Endothelial cell of umbilical vein (primary cell): ENCODE measurements at regions of chr4 and their contacts with region 1.

Region 1: GRCh38 chr4:42480717-42481116 is 83.4 kb downstream of the SHISA3 start:
- DNase-seq: no peak
- H3K4me3 ChIP-seq: no peak overlapping the region
- H3K27ac ChIP-seq: no peak overlapping the region
- H3K4me1 ChIP-seq: no peaks in the 10 kb centered on the region
- H3K27me3 ChIP-seq: no peaks in the 10 kb centered on the region
- CTCF ChIP-seq: no peak
- POLR2A ChIP-seq: no peak

Region 2: GRCh38 chr4:41232406-41232805 is 1248.3 kb before region 1 on chr4:
- CTCF ChIA-PET with region 1: no interaction called
- POLR2A ChIA-PET with region 1: no interaction called
- dilution Hi-C with region 1: no loop called
- intact Hi-C with region 1: no loop called
- DNase-seq: peak; percentile 38
- H3K4me3 ChIP-seq: no peak overlapping the region
- H3K27ac ChIP-seq: no peak overlapping the region
- H3K4me1 ChIP-seq: no peaks in the 10 kb centered on the region
- H3K27me3 ChIP-seq: peaks cover 0 to 3% of the 10 kb centered on the region in 2 experiments
- CTCF ChIP-seq: peak; percentile 5 to 7
- POLR2A ChIP-seq: no peak

Region 3: GRCh38 chr4:42460043-42460442 is 20.7 kb before region 1 on chr4:
- CTCF ChIA-PET with region 1: no interaction called
- POLR2A ChIA-PET with region 1: no interaction called
- dilution Hi-C with region 1: no loop called
- intact Hi-C with region 1: loop called (anchors 1 kb)
- DNase-seq: no peak
- H3K4me3 ChIP-seq: no peak overlapping the region
- H3K27ac ChIP-seq: no peak overlapping the region
- H3K4me1 ChIP-seq: no peaks in the 10 kb centered on the region
- H3K27me3 ChIP-seq: no peaks in the 10 kb centered on the region
- CTCF ChIP-seq: no peak
- POLR2A ChIP-seq: no peak

Region 4: DNA sequence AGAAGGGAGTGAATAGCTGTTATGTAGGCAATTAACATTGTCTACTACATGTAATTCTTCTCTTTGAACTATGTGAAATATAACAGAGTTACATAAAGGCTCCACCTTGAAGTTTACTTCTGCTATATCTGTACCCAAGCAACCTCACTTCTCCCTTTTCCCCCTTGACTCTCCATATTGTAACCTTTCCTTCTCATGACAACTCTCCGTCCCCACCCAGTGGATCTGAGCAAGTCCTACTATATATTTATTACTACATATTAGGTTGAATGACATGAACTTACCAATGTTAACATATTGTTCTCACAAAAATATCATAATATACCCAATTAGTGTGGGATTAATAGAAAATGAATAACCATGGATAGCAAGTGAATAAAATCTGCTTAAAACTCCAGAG is 269.4 kb after region 1 on chr4:
- CTCF ChIA-PET with region 1: no interaction called
- POLR2A ChIA-PET with region 1: no interaction called
- dilution Hi-C with region 1: no loop called
- intact Hi-C with region 1: no loop called
- DNase-seq: peak; percentile 18
- H3K4me3 ChIP-seq: no peak overlapping the region
- H3K27ac ChIP-seq: no peak overlapping the region
- H3K4me1 ChIP-seq: no peaks in the 10 kb centered on the region
- H3K27me3 ChIP-seq: no peaks in the 10 kb centered on the region
- CTCF ChIP-seq: no peak
- POLR2A ChIP-seq: no peak